Cardiac septum (tissue), 1 donor: ENCODE measurements at regions of chr17 and their contacts with region 1.

Region 1: DNA sequence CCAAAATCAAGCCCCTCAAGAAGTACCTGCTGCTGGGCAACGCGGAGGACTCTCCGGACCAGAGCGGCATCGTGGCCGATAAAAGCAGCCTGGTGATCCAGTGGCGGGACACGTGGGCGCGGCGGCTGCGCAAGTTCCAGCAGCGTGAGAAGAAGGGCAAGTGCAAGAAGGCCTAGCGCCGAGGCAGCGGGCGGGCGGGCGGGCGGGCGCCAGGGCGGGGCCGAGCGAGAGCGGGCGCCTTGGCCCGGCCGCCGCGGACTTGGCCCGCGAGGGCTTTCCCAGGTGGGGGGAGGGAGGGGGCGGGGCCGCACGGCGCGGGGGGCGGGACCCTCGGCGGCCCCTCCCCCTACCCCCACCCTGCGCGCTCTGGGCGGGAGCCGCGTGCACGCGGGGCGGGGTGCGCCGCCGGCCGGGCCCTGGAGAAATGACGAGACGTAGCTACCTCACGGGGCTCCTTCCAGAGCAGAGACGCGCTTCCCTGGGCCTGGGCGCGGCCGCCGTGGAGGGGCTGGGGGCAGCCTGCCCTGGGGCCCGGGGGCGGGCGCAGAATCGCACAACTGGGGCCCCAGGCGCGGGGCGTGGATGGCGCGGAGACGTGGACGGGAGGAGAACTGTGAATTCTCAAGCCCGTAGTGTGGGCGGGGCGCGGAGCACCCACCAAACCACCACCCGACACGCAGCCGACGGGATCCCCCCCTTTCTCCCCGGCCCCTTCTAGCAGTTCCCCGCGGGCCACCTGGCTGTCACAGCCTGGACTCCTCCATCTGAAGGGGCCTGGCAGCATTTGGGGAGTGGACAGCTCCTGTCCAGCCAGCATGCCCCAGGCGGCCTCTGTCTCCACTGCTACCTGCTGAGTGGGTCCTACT is 218.7 kb downstream of the NTN1 start:
- DNase-seq: peak; percentile 87

Region 2: DNA sequence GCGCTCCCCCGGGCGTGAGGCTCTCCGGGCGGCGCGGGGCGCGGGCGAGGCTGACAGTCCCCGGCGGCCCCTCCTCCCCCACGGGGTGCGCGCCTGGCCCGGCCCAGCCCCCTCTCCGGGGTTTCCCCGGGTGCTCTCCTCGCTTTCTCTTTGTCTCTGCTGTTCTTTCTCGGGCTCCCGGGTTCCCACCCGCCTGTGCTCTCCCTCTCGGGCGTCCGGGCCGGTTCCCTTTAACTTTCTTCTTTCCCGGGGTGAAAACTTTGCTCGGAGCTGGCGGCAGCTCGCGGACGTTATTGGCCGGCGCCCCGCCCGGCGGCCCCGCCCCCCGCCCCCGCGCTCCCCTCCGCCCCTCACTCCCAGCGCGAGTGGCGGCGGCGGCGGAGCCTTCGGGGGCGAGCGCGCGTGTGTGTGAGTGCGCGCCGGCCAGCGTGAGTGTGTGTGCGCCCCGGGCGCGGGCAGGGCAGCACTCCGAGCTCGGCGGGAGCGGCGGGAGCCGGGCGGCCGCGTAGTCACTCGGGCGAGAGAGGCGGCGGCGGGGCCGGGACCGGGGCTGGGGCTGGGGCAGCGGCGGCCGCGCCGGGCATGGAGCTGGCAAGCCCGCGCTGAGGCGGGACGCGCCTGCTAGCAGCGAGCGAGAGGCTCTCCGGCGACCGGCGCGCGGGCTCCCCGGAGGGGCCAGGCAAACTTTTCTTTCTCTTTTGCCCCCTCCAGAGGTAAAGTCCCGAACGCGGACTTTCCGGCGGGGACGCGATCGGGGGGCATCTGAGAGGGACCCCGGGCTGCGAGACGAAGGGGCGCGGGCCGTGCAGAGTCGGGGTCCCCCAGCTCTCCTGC is 218.7 kb before region 1 on chr17 and contains the start of gene NTN1:
- intact Hi-C with region 1: loop called (anchors 5 kb)
- DNase-seq: no peak
- total RNA-seq, gene NTN1: 11.5 TPM

Region 3: GRCh38 chr17:9371019-9371418 is 131.0 kb after region 1 on chr17:
- intact Hi-C with region 1: loop called (anchors 2 kb)
- DNase-seq: no peak